HepG2 (cell line): ENCODE measurements at regions of chr17 and their contacts with region 1.

Region 1: DNA sequence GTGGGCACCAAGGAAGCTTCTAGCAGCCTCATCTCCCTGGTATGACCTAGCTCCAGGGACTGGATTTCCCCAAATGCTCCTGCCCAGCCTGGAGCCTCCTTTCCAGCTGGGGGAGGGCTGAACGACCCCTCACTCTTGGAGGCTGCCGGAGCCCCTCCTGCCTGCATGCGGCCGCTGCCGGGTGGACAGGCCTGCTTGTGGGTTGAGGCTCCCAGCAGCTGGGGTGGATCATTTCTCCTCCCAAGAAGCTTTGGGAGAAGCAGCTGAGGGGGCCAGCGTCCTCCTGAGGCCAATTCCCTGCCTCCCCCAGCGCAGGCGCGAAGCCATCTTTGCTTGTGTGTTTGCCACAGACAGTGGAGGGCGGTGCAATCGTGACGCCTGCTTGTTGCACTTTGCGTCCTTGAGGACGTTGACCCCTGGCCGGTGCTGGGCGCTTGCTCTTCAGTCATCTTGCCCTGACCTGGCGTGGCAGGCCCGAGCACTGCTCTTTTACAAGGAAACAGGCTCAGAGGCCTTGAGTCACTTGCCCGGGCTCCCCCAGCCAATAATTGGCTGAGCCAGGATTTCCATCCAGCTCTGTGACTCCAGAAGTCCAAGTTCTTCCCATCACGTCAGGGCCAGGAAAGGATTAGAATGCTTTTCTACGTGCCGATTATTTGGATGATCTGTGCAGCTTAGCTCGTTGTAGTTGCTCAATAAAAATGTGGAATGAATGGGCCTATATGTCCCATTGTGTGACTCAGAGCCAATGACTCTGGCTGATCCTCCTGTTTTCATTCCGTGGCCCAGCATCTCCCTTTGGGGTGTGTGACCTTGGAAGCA is 213.9 kb downstream of the SEC14L1 start:
- DNase-seq: peak; percentile 93
- ATAC-seq: peak; percentile 80
- H3K4me3 ChIP-seq: peak overlapping the region; percentile 7 to 39 (median 12); a peak in 3 of 6 replicates
- H3K27ac ChIP-seq: peak overlapping the region; percentile 79
- H3K4me1 ChIP-seq: peaks cover 73% of the 10 kb centered on the region
- H3K27me3 ChIP-seq: no peaks in the 10 kb centered on the region
- CTCF ChIP-seq: peak; percentile 66
- EP300 ChIP-seq: peak in 1 of 2 experiments; percentile 70; a peak in 3 of 4 replicates
- POLR2A ChIP-seq: peak; percentile 26 to 32; a peak in 1 of 4 replicates
- RAD21 ChIP-seq: 0 out of 2 replicates have a peak, but pooled peaks have one; percentile 44

Region 2: GRCh38 chr17:77254951-77255825 is 99.4 kb before region 1 on chr17:
- CTCF ChIA-PET with region 1: no interaction called
- POLR2A ChIA-PET with region 1: no interaction called
- in situ Hi-C with region 1: no loop called
- intact Hi-C with region 1: no loop called
- DNase-seq: peak; percentile 73
- ATAC-seq: peak; percentile 85
- H3K4me3 ChIP-seq: peak overlapping the region; percentile 19 to 68 (median 38)
- H3K27ac ChIP-seq: no peak overlapping the region
- H3K4me1 ChIP-seq: peaks cover 32% of the 10 kb centered on the region
- H3K27me3 ChIP-seq: peaks cover 6 to 74% of the 10 kb centered on the region in 2 experiments; a peak in 4 of 5 replicates
- CTCF ChIP-seq: 0 out of 2 replicates have a peak, but pooled peaks have one; percentile 8
- EP300 ChIP-seq: peak; percentile 31 to 43; a peak in 2 of 4 replicates
- POLR2A ChIP-seq: no peak
- RAD21 ChIP-seq: peak; percentile 31

Region 3: GRCh38 chr17:77372444-77373298 is 18.0 kb after region 1 on chr17:
- CTCF ChIA-PET with region 1: no interaction called
- POLR2A ChIA-PET with region 1: interaction called, 12 read pairs
- in situ Hi-C with region 1: no loop called
- intact Hi-C with region 1: loop called (anchors 1 kb)
- DNase-seq: peak; percentile 94
- ATAC-seq: peak; percentile 75
- H3K4me3 ChIP-seq: peak overlapping the region; percentile 76 to 91 (median 88); a peak in 5 of 6 replicates
- H3K27ac ChIP-seq: peak overlapping the region; percentile 71
- H3K4me1 ChIP-seq: peaks cover 65% of the 10 kb centered on the region
- H3K27me3 ChIP-seq: no peaks in the 10 kb centered on the region
- CTCF ChIP-seq: peak; percentile 63
- EP300 ChIP-seq: peak in 1 of 2 experiments; percentile 37; a peak in 1 of 4 replicates
- POLR2A ChIP-seq: no peak; a peak in 1 of 4 replicates
- RAD21 ChIP-seq: peak; percentile 55